ENCODE measurements at regions of chr19 and their contacts with region 1.

Region 1: GRCh38 chr19:11137542-11138384 is 17.8 kb downstream of the SPC24 start:
- DNase-seq: peak; percentile 76 to 89
- H3K4me3 ChIP-seq: peak overlapping the region; percentile 12; the same call in 1 of the 2 replicates
- H3K27ac ChIP-seq: peak overlapping the region; percentile 56
- H3K4me1 ChIP-seq: peaks cover 55% of the 10 kb centered on the region
- H3K27me3 ChIP-seq: no peaks in the 10 kb centered on the region
- CTCF ChIP-seq: peak; percentile 80

Region 2: GRCh38 chr19:10936661-10937084 is 201.1 kb before region 1 on chr19:
- CTCF ChIA-PET with region 1: interaction called, 7 read pairs
- POLR2A ChIA-PET with region 1: no interaction called
- intact Hi-C with region 1: loop called (anchors 10 kb)
- DNase-seq: peak; percentile 45 to 75
- H3K4me3 ChIP-seq: no peak overlapping the region
- H3K27ac ChIP-seq: no peak overlapping the region
- H3K4me1 ChIP-seq: peaks cover 49% of the 10 kb centered on the region
- H3K27me3 ChIP-seq: no peaks in the 10 kb centered on the region
- CTCF ChIP-seq: peak; percentile 84

Region 3: DNA sequence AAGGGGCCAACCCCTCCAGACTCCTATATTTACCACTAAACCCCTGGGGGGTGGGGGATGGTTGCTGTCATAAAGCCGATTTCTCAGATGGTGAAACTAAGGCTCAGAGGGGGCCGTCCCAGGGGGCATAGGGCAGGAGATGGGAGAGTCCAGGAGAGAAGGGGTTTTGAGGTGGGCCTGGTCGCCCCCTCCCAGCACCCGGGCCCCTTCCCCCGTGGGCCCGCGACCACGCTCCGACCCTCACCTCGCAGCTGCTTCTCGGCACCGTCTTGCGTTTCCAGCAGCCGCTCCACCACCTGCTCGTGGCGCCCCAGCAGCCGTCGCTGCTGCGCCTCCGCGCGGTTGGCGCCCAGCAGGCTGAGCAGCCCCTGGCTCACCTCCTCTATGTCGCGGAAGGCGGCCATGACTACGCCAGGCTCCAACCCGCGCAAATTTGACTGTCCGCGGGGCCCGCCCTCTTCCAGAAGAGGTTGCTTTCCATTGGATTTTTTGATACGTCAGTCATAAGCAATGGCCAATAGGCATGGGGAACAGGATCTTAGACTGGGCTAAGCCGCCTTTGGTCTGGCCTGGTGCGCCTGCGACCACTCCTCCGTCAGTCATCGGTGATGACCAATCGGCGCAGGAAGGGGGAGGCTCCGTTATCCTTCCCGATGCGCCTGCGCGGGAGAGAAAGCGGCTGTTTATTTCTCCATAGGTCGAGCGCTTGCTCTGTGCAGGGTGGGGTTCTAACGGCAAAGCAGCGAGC is 17.8 kb after region 1 on chr19 and contains the start of gene SPC24:
- CTCF ChIA-PET with region 1: interaction called, 14 read pairs
- POLR2A ChIA-PET with region 1: no interaction called
- intact Hi-C with region 1: no loop called
- DNase-seq: peak; percentile 96 to 97
- H3K4me3 ChIP-seq: peak within 1 kb of the TSS; percentile 72
- H3K27ac ChIP-seq: no peak within 1 kb of the TSS
- H3K4me1 ChIP-seq: peaks cover 40% of the 10 kb centered on the region
- H3K27me3 ChIP-seq: no peaks in the 10 kb centered on the region
- CTCF ChIP-seq: no peak
- total RNA-seq, gene SPC24: 50.9 and 59.2 TPM in 2 replicates

Region 4: DNA sequence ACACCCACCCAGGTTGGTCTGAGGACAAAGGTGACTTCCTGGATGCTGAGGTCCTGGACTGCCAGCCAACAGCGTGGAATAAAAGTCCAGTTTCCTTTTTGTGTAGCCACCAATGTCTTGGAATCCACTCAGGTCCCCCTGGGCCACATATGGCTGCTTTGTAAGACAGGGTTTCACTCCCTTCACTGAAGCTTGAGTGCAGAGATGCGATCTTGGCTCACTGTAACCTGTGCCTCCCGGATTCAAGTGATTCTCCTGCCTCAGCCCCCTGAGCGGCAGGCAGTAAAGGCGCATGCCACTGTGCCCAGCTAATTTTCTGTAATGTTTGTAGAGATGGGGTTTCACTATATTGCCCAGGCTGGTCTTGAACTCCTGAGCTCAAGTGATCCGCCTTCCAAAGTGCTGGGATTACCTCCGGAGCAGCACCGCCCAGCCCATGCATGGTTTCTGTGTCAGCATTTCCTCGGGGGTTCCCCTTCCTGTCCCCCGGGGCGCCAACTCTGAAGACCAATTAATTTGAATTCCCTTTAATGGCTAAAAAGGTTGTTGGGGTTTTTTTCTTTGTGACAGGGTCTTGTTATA is 42.0 kb after region 1 on chr19:
- CTCF ChIA-PET with region 1: no interaction called
- POLR2A ChIA-PET with region 1: no interaction called
- intact Hi-C with region 1: no loop called
- DNase-seq: no peak
- H3K4me3 ChIP-seq: no peak overlapping the region
- H3K27ac ChIP-seq: no peak overlapping the region
- H3K4me1 ChIP-seq: no peaks in the 10 kb centered on the region
- H3K27me3 ChIP-seq: no peaks in the 10 kb centered on the region
- CTCF ChIP-seq: no peak

Region 5: GRCh38 chr19:11197264-11198174 is 59.8 kb after region 1 on chr19 and contains the start of gene KANK2:
- CTCF ChIA-PET with region 1: no interaction called
- POLR2A ChIA-PET with region 1: interaction called, 4 read pairs
- intact Hi-C with region 1: loop called (anchors 2 kb)
- DNase-seq: peak; percentile 84 to 95
- H3K4me3 ChIP-seq: peak within 1 kb of the TSS; percentile 76
- H3K27ac ChIP-seq: peak within 1 kb of the TSS; percentile 37
- H3K4me1 ChIP-seq: 0 out of 2 replicates have a peak, but pooled peaks cover 6% of the 10 kb centered on the region
- H3K27me3 ChIP-seq: no peaks in the 10 kb centered on the region
- CTCF ChIP-seq: no peak; the same call in 1 of the 2 replicates
- total RNA-seq, gene KANK2: 32.9 and 39.4 TPM in 2 replicates

Region 6: GRCh38 chr19:11264452-11265176 is 126.9 kb after region 1 on chr19:
- CTCF ChIA-PET with region 1: interaction called, 12 read pairs
- POLR2A ChIA-PET with region 1: no interaction called
- intact Hi-C with region 1: no loop called
- DNase-seq: peak; percentile 90 to 94
- H3K4me3 ChIP-seq: no peak overlapping the region
- H3K27ac ChIP-seq: peak overlapping the region; percentile 62
- H3K4me1 ChIP-seq: peaks cover 24% of the 10 kb centered on the region
- H3K27me3 ChIP-seq: no peaks in the 10 kb centered on the region
- CTCF ChIP-seq: no peak

Region 7: DNA sequence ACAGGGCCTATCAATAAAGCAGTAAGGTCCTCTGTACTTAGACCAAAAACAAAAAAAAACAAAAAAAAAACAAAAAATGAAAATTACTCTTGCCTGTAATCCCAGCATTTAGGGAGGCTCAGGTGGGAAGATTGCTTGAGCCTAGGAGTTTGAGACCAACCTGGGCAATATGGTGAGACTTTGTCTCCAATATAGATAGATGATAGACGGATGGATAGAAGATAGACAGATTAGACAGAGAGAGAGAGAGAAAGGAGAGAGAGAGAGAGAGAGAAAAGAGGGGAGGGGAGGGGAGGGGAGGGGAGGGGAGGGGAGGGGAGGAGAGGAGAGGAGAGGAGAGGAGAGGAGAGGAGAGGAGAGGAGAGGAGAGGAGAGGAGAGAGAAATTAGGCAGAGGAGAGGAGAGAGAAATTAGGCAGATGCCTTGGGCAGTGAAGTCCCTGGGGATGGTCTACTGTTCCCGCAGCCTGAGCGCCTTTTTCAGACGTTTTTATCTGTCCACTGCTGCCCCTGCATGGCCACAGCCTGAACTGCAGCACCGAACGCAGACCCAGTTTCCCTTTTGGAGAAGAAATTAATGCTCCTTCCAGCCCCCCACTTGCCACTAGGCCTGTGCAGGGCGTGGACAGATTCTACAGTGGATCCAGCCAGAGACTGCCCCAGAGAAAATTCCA is 449.7 kb after region 1 on chr19:
- CTCF ChIA-PET with region 1: no interaction called
- POLR2A ChIA-PET with region 1: no interaction called
- intact Hi-C with region 1: loop called (anchors 1 kb)
- DNase-seq: peak in 1 of 2 experiments; percentile 76
- H3K4me3 ChIP-seq: no peak overlapping the region
- H3K27ac ChIP-seq: no peak overlapping the region
- H3K4me1 ChIP-seq: 0 out of 2 replicates have a peak, but pooled peaks cover 4% of the 10 kb centered on the region
- H3K27me3 ChIP-seq: no peaks in the 10 kb centered on the region
- CTCF ChIP-seq: peak; percentile 93

Measured in PC-9 (cell line).